ENCODE measurements at regions of chr7 and their contacts with region 1.

Region 1: DNA sequence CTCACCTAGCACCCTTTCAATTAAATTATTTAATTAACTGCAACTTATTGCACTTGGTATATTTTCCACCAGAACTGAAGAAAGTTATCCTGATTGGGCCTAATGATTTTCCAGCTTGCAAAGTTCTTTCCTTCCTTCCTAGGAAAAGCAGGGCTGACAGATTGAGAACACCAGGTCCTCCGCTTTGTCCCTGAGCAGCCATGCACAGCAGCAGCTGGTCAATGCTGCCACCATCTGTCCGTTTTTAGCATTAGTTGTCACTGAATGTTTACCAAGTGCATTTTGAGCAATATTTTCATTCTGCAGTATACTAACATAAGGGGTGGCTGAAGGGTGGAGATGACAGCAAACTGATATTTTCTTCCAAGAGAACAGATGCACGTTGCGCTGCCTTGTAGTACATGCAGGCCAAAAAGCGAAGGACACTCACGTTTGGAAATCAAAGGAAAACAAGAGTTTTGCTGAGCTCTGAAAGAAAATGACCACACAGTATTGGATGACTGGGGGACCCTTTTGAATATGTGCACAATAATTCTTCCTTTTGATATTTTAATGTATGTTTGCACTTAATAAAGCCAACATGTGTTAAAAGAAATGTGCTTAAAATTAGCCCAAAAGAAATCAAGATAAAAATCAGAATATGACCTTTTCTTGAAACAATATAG is 248.8 kb upstream of the PTN start:
- DNase-seq: peak; percentile 46 to 58 (median 55)
- ATAC-seq: peak in 3 of 4 donors; percentile 80 to 93 (median 82)
- H3K4me3 ChIP-seq: no peak overlapping the region
- H3K27ac ChIP-seq: peak overlapping the region in 1 of 12 donors; percentile 35
- H3K4me1 ChIP-seq: peaks cover 0 to 13% (median 0%) of the 10 kb centered on the region in 12 donors
- H3K27me3 ChIP-seq: no peaks in the 10 kb centered on the region
- CTCF ChIP-seq: peak; percentile 53 to 84 (median 71)
- POLR2A ChIP-seq: no peak

Region 2: DNA sequence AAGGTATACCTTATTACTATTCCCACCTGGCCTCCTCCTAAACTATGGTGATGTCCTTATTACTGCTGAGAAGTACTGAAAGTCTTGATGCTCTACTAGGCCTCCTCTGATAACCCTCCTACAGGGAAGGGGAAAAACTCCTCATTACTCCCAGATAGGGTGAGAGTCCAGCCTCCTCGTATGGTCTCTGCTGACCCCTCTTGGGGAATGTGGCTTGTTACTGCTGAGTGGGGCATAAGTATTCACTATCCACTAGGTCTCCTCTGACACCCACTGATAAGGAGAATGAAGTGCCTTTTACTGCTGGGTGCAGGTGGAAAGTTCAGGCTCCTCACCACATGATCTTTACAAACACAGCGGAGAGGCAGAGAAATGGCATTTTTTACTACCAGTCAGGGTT is 501.0 kb before region 1 on chr7:
- intact Hi-C with region 1: loop called in 1 of 10 experiments (anchors 10 kb)
- DNase-seq: no peak
- ATAC-seq: peak; percentile 47 to 86 (median 77)
- H3K4me3 ChIP-seq: no peak overlapping the region
- H3K27ac ChIP-seq: no peak overlapping the region
- H3K4me1 ChIP-seq: no peaks in the 10 kb centered on the region
- H3K27me3 ChIP-seq: no peaks in the 10 kb centered on the region
- CTCF ChIP-seq: peak in 9 of 12 donors; percentile 13 to 50 (median 33)
- POLR2A ChIP-seq: no peak

Region 3: GRCh38 chr7:137454246-137454724 is 138.1 kb before region 1 on chr7:
- intact Hi-C with region 1: loop called in 2 of 10 experiments (anchors 10 kb)
- DNase-seq: no peak
- ATAC-seq: peak in 3 of 4 donors; percentile 54 to 74 (median 66)
- H3K4me3 ChIP-seq: peak overlapping the region in 6 of 12 donors; percentile 13 to 44 (median 20)
- H3K27ac ChIP-seq: peak overlapping the region in 9 of 12 donors; percentile 17 to 75 (median 56)
- H3K4me1 ChIP-seq: peaks cover 0 to 19% (median 6%) of the 10 kb centered on the region in 12 donors
- H3K27me3 ChIP-seq: no peaks in the 10 kb centered on the region
- CTCF ChIP-seq: peak; percentile 53 to 82 (median 66)
- POLR2A ChIP-seq: no peak